K562 (cell line): ENCODE measurements at regions of chr4 and their contacts with region 1.

Region 1: GRCh38 chr4:47704693-47705325 is 133.1 kb downstream of the CORIN start:
- DNase-seq: peak in 2 of 4 experiments; percentile 14 to 34
- ATAC-seq: peak; percentile 94
- H3K4me3 ChIP-seq: no peak overlapping the region
- H3K27ac ChIP-seq: no peak overlapping the region
- H3K4me1 ChIP-seq: no peaks in the 10 kb centered on the region
- H3K27me3 ChIP-seq: peaks cover 0 to 10% of the 10 kb centered on the region in 2 experiments; a peak in 2 of 5 replicates
- CTCF ChIP-seq: peak; percentile 43 to 52 (median 51)
- EP300 ChIP-seq: no peak
- POLR2A ChIP-seq: no peak
- RAD21 ChIP-seq: peak; percentile 29 to 61; a peak in 2 of 4 replicates

Region 2: GRCh38 chr4:47836641-47837093 is 131.9 kb after region 1 on chr4:
- CTCF ChIA-PET with region 1: no interaction called
- POLR2A ChIA-PET with region 1: no interaction called
- in situ Hi-C with region 1: no loop called
- intact Hi-C with region 1: loop called (anchors 1 kb)
- DNase-seq: peak; percentile 14 to 52 (median 34)
- ATAC-seq: peak; percentile 97
- H3K4me3 ChIP-seq: no peak overlapping the region
- H3K27ac ChIP-seq: no peak overlapping the region
- H3K4me1 ChIP-seq: peaks cover 0 to 13% of the 10 kb centered on the region in 2 experiments; a peak in 2 of 5 replicates
- H3K27me3 ChIP-seq: no peaks in the 10 kb centered on the region
- CTCF ChIP-seq: peak; percentile 57 to 69 (median 60)
- EP300 ChIP-seq: no peak
- POLR2A ChIP-seq: no peak
- RAD21 ChIP-seq: peak in 1 of 2 experiments; percentile 52; a peak in 2 of 4 replicates

Region 3: DNA sequence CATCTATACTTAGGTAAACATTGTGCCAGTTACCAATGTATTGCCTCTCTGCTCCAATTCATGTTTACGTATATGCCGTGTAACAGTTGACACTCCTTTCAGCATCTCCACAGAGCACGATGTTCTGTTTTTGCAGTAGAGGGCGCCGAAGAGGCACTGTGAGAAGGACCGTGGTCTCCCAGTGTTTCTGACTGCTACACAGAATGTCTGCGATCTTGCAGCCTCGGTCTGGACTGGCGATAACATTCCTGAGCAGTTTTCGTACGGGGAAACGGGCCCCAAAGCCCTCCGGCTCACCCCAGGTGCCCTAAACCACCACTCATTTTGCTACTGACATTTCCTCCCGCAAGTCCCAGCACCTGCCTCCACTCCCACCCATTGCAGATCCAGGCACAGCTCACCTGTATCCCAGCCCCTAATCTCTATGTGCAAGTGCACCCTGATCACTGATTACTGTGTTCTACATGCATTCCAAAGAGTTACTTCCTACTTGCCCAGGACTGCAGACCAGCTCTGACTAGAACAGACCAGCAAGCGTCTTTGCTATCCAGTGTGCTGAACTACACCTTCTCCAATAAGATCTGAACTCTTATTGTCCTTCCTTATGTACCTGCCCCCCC is 221.9 kb after region 1 on chr4:
- CTCF ChIA-PET with region 1: no interaction called
- POLR2A ChIA-PET with region 1: no interaction called
- in situ Hi-C with region 1: loop called (anchors 10 kb)
- intact Hi-C with region 1: loop called (anchors 5 kb)
- DNase-seq: peak; percentile 26 to 76 (median 48)
- ATAC-seq: peak; percentile 100
- H3K4me3 ChIP-seq: no peak overlapping the region
- H3K27ac ChIP-seq: no peak overlapping the region
- H3K4me1 ChIP-seq: no peaks in the 10 kb centered on the region; a peak in 1 of 5 replicates
- H3K27me3 ChIP-seq: no peaks in the 10 kb centered on the region; a peak in 3 of 5 replicates
- CTCF ChIP-seq: peak; percentile 73 to 82 (median 74)
- EP300 ChIP-seq: no peak
- POLR2A ChIP-seq: no peak
- RAD21 ChIP-seq: peak in 1 of 2 experiments; percentile 61; a peak in 3 of 4 replicates